GM12878 (cell line): ENCODE measurements at regions of chr9 and their contacts with region 1.

Region 1: DNA sequence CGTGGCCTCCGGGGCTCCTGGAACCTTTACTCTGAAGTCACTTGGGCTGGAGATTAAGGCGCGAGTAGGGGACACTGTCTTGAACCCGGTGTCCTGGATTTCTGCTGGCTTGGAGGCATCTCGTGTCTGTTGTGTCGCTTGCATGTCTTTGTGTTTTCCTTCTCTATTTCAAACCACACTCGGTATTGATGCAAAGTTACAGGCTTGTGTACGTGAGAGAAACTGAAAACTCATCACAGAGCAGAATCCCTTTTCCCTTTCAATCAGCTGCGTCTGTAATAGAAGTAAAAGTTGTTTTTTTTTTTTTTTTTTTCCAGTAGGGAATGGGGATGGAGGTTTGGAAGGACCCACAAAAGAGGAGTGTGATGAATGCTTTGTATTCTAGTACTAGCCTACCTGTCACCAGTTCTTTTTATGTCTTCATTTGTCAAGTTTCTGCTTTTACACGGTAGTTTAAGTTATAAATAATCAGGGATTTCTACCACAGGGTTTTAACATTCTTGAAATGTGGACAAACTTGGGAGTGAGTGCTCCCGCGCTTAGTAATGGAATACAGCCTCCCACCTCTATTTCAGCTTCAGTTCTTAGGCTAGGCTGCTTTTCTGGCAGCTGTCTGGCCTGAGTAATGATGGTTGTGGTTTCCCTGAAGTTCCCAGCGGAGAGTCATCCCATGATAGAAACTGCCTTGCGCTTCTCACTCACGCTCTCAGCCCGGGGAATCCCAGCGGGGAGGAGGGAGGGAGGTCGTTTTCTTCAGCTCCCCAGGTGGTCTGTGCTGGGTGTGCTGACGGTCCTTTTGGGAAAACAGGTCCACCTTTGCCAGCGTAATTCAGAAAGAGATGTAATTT is 763 bp downstream of the TJP2 start:
- DNase-seq: peak; percentile 74
- ATAC-seq: peak; percentile 69
- H3K4me3 ChIP-seq: peak overlapping the region; percentile 80
- H3K27ac ChIP-seq: peak overlapping the region; percentile 82
- H3K4me1 ChIP-seq: peaks cover 13% of the 10 kb centered on the region
- H3K27me3 ChIP-seq: no peaks in the 10 kb centered on the region
- CTCF ChIP-seq: no peak
- EP300 ChIP-seq: peak; percentile 81 to 84
- POLR2A ChIP-seq: no peak; the same call in none of the 2 replicates
- RAD21 ChIP-seq: no peak

Region 2: DNA sequence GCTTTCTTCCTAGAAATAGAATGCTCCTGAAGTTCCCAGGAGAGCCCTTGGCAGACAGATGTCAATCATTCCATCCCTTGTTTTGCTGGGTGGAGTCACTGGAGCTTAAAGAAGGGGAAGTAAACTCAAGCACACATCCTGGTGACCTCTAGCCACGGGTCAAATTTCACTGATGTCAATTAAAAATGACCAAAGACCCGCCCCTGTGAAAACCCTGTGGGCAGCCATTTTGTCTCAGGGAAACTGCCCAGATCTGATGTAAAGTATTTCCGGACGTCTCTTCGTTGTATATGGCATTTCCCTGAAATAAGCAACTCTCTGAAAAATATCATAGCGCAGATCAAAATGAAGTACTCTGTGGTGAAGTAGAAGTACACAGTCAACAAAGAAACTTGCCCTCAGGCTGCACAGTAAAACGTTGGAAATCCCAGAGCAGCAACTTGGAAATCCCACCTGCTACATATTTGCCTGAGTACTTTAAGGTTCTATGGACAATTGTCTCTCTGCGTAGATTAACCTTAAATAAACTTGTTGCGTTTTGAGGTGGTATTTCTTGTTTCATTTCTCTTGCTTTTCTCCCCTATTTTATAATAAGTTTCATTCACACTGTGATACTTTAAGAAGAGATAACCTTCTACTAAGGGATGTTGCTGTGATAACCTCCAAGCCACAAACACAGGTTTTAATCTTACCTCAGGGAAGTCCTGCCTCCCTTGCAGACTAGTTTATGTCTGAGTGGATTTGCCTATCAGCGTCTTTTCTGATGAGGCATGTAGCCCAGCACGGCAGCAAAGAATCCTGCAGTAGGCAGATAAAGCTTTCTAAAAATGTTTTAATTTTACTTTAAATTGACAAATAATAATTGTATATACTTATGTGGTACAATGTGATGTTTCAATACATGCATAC is 530.7 kb before region 1 on chr9:
- CTCF ChIA-PET with region 1: no interaction called
- POLR2A ChIA-PET with region 1: no interaction called
- RAD21 ChIA-PET with region 1: no interaction called
- SMC1A ChIA-PET with region 1: no interaction called
- in situ Hi-C with region 1: no loop called
- intact Hi-C with region 1: loop called (anchors 10 kb)
- DNase-seq: peak; percentile 63
- ATAC-seq: peak; percentile 83
- H3K4me3 ChIP-seq: peak overlapping the region; percentile 36; the same call in 1 of the 2 replicates
- H3K27ac ChIP-seq: peak overlapping the region; percentile 76
- H3K4me1 ChIP-seq: peaks cover 49% of the 10 kb centered on the region
- H3K27me3 ChIP-seq: no peaks in the 10 kb centered on the region
- CTCF ChIP-seq: no peak
- EP300 ChIP-seq: 0 out of 4 replicates have a peak, but pooled peaks have one; percentile 18 to 46
- POLR2A ChIP-seq: no peak
- RAD21 ChIP-seq: no peak

Region 3: DNA sequence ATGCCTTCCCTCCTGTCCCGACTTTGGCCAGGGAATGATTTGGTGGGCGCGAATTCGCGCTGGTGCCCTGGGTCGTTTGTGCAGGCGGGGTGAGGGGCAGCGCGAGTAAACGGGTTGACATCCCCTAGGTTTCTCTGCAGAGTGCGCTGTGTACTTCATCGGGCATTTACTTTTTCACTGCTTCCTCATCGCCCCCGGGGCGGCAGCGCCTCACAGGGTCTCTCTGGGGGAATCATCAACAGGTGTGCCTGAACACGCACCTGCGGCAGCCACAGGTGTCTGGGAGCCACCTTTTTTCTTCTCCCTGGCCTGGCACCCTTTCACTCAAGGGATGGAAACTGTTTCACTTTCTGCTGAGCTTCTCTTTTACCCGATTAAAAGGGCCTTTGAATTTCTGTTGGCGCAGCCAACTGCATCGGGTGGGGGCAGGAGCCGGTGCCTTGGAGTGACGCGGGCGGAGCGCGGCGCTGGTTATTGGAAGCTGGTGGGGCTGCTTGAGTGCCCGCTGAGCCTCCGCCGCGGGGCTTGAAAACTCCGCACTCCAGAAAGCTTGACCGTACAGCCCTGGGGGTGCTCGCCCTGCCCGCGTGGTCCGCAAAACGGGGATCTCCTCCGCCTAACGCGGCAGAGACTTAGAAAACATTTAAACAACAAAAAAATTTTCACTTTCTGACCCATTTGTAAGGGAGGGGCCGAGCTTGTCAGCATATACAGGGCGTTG is 52.9 kb before region 1 on chr9:
- CTCF ChIA-PET with region 1: no interaction called
- POLR2A ChIA-PET with region 1: interaction called, 4 read pairs
- RAD21 ChIA-PET with region 1: no interaction called
- SMC1A ChIA-PET with region 1: interaction called, 3 read pairs
- in situ Hi-C with region 1: no loop called
- intact Hi-C with region 1: loop called (anchors 5 kb)
- DNase-seq: no peak
- ATAC-seq: peak; percentile 79
- H3K4me3 ChIP-seq: peak overlapping the region; percentile 88
- H3K27ac ChIP-seq: no peak overlapping the region
- H3K4me1 ChIP-seq: no peaks in the 10 kb centered on the region
- H3K27me3 ChIP-seq: peaks cover 0 to 3% of the 10 kb centered on the region in 2 experiments; a peak in 1 of 4 replicates
- CTCF ChIP-seq: peak in 2 of 3 experiments; percentile 1 to 24; a peak in 1 of 6 replicates
- EP300 ChIP-seq: no peak
- POLR2A ChIP-seq: no peak
- RAD21 ChIP-seq: peak; percentile 31; the same call in 1 of the 2 replicates

Region 4: DNA sequence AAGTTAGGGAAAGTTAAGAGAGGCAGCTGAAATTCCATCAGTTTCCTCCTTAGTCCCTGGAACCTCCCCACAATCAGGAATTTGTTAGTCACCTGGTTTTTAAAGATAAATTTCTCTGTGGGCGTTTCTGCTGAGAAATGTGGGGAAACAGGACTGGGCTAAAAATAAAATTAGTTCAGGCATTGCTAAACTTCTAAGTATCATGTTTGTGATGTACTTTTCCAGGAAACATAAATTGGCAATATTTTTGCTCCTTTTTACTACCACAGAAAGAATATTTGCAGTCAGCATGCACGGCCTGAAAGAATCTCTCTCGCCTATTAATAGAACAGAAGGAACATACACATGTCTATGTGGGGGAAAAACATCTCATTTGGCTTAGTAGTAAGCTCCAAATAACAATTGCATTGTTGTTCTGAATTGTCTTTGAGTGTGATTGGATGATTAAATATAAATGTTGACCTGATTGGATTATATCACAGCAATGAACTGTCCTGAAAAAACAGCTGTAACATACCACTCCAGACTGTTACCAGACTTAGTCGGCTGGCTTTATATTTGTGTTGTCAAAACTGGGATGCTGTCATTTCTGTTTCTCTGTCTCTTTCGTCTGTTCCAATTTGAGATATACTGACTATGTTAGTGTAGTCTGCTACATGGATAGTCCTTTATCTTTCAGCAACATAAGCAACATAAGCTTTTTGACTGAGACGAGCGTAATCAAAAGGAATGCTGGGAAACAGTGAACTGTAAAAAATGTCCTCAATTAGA is 12.2 kb after region 1 on chr9:
- CTCF ChIA-PET with region 1: interaction called, 134 read pairs
- POLR2A ChIA-PET with region 1: interaction called, 8 read pairs
- RAD21 ChIA-PET with region 1: interaction called, 8 read pairs
- SMC1A ChIA-PET with region 1: interaction called, 27 read pairs
- in situ Hi-C with region 1: no loop called
- intact Hi-C with region 1: loop called (anchors 2 kb)
- DNase-seq: no peak
- ATAC-seq: no peak
- H3K4me3 ChIP-seq: no peak overlapping the region
- H3K27ac ChIP-seq: no peak overlapping the region
- H3K4me1 ChIP-seq: peaks cover 20% of the 10 kb centered on the region
- H3K27me3 ChIP-seq: no peaks in the 10 kb centered on the region
- CTCF ChIP-seq: no peak
- EP300 ChIP-seq: no peak
- POLR2A ChIP-seq: no peak
- RAD21 ChIP-seq: no peak

Region 5: GRCh38 chr9:69199769-69200470 is 25.1 kb after region 1 on chr9:
- CTCF ChIA-PET with region 1: interaction called, 134 read pairs
- POLR2A ChIA-PET with region 1: no interaction called
- RAD21 ChIA-PET with region 1: interaction called, 4 read pairs
- SMC1A ChIA-PET with region 1: interaction called, 45 read pairs
- in situ Hi-C with region 1: no loop called
- intact Hi-C with region 1: no loop called
- DNase-seq: no peak
- ATAC-seq: no peak
- H3K4me3 ChIP-seq: no peak overlapping the region
- H3K27ac ChIP-seq: no peak overlapping the region
- H3K4me1 ChIP-seq: no peaks in the 10 kb centered on the region
- H3K27me3 ChIP-seq: no peaks in the 10 kb centered on the region
- CTCF ChIP-seq: no peak
- EP300 ChIP-seq: no peak
- POLR2A ChIP-seq: no peak
- RAD21 ChIP-seq: no peak

Region 6: GRCh38 chr9:69759421-69760277 is 584.8 kb after region 1 on chr9 and contains the start of gene PTAR1:
- CTCF ChIA-PET with region 1: no interaction called
- POLR2A ChIA-PET with region 1: no interaction called
- RAD21 ChIA-PET with region 1: no interaction called
- SMC1A ChIA-PET with region 1: no interaction called
- in situ Hi-C with region 1: no loop called
- intact Hi-C with region 1: loop called (anchors 10 kb)
- DNase-seq: peak; percentile 35
- ATAC-seq: peak; percentile 86
- H3K4me3 ChIP-seq: peak within 1 kb of the TSS; percentile 92
- H3K27ac ChIP-seq: peak within 1 kb of the TSS; percentile 83
- H3K4me1 ChIP-seq: peaks cover 2% of the 10 kb centered on the region; the same call in 1 of the 2 replicates
- H3K27me3 ChIP-seq: no peaks in the 10 kb centered on the region
- CTCF ChIP-seq: no peak
- EP300 ChIP-seq: no peak
- POLR2A ChIP-seq: peak; percentile 98
- RAD21 ChIP-seq: no peak
- polyA plus RNA-seq, gene PTAR1: 4.9 to 6.6 TPM